HCT116 (cell line): ENCODE measurements at regions of chr16 and their contacts with region 1.

Region 1: DNA sequence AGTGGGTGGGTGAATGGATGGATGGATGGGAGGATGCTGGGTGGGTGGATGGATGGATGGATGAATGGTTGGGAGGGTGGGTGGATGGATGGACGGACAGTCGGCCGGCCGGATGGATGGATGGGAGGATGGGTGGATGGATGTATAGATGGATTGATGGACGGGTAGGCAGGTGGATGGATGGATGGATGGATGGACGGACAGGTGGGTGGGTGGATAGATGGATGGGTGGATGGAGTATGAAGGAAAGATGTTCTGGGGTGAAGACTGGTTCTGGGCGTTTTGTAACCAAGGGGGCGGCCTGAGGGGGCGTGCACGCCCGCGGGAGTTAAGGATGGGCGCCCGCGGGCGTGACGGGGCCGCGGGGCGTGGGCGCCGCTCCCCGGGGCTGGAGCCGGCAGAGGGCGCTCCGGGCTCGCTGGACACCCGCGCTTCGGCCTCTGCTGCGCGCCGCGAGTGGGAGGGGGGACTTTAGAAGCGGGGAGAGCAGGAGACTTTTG is at the start of gene NECAB2:
- DNase-seq: no peak
- ATAC-seq: peak; percentile 86
- H3K4me3 ChIP-seq: no peak within 1 kb of the TSS
- H3K27ac ChIP-seq: no peak within 1 kb of the TSS
- H3K4me1 ChIP-seq: no peaks in the 10 kb centered on the region
- H3K27me3 ChIP-seq: no peaks in the 10 kb centered on the region
- CTCF ChIP-seq: peak; percentile 55 to 79 (median 69); a peak in 5 of 6 replicates
- POLR2A ChIP-seq: no peak
- RAD21 ChIP-seq: peak; percentile 83
- total RNA-seq, gene NECAB2: 0.61 TPM

Region 2: DNA sequence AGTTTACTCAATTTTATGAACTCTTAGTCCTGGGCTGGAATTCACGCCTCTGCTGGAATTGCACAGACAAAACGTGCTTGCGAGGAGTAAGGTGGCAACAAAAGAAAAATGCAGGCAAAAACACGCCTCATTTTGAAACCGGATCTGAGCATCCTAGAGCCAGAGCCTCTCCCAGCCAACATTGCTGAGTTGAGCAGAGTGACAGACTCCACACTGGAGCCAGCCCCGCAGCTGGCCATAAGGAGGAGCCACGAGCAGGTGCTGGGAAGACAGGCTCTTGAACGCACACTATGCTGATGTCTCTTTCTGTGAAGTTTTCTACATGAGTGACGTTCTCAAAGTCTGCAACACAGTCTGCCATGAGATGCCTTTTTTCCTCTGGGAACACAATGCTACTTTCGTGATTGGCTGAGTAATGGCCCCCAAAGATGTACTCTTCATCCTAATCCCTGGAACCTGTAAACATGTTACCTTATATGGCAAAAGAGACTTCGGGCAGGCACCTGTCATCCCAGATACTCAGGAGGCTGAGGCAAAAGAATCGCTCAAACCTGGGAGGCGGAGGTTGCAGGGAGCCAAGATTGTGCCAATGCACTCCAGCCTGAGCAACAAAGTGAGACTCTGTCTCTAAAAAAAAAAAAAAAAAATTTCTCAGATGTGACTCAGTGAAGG is 174.5 kb before region 1 on chr16:
- CTCF ChIA-PET with region 1: no interaction called
- POLR2A ChIA-PET with region 1: no interaction called
- RAD21 ChIA-PET with region 1: no interaction called
- intact Hi-C with region 1: no loop called
- DNase-seq: no peak
- ATAC-seq: peak; percentile 82
- H3K4me3 ChIP-seq: no peak overlapping the region
- H3K27ac ChIP-seq: no peak overlapping the region
- H3K4me1 ChIP-seq: no peaks in the 10 kb centered on the region
- H3K27me3 ChIP-seq: peaks cover 14% of the 10 kb centered on the region
- CTCF ChIP-seq: 0 out of 6 replicates have a peak, but pooled peaks of 1 of the 3 experiments have one; percentile 11
- POLR2A ChIP-seq: no peak
- RAD21 ChIP-seq: no peak

Region 3: DNA sequence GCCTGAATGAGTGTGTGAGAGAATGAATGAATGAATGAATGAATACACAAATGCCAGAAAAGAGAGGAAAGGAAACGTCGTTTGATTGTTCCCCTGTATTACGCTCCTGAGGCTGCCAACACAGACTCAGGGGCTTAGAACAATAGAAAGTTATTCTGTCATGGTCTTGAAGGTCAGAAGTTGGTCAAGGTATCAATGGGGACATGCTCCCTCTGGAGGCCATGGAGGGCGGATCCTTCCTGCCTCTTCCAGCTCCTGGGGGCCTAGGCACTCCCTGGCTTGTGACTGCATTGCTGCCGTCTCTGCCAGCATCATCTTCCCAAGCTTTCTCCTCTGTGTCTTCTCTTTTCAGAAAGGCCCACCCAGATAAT is 76.2 kb after region 1 on chr16:
- CTCF ChIA-PET with region 1: interaction called, 3 read pairs
- POLR2A ChIA-PET with region 1: no interaction called
- RAD21 ChIA-PET with region 1: interaction called in 1 of 2 experiments, 3 read pairs
- intact Hi-C with region 1: loop called (anchors 1 kb)
- DNase-seq: peak; percentile 41
- ATAC-seq: peak; percentile 82
- H3K4me3 ChIP-seq: no peak overlapping the region
- H3K27ac ChIP-seq: no peak overlapping the region
- H3K4me1 ChIP-seq: peaks cover 2 to 5% of the 10 kb centered on the region in 2 experiments; a peak in 1 of 4 replicates
- H3K27me3 ChIP-seq: no peaks in the 10 kb centered on the region; the same call in 1 of the 2 replicates
- CTCF ChIP-seq: peak; percentile 67 to 80 (median 73); a peak in 5 of 6 replicates
- POLR2A ChIP-seq: no peak
- RAD21 ChIP-seq: peak; percentile 66

Region 4: GRCh38 chr16:84484579-84485254 is 516.9 kb after region 1 on chr16:
- CTCF ChIA-PET with region 1: no interaction called
- POLR2A ChIA-PET with region 1: no interaction called
- RAD21 ChIA-PET with region 1: no interaction called
- intact Hi-C with region 1: loop called (anchors 1 kb)
- DNase-seq: peak; percentile 41
- ATAC-seq: peak; percentile 84
- H3K4me3 ChIP-seq: no peak overlapping the region
- H3K27ac ChIP-seq: no peak overlapping the region
- H3K4me1 ChIP-seq: no peaks in the 10 kb centered on the region
- H3K27me3 ChIP-seq: no peaks in the 10 kb centered on the region
- CTCF ChIP-seq: peak; percentile 75 to 91 (median 80)
- POLR2A ChIP-seq: no peak
- RAD21 ChIP-seq: peak; percentile 95